AG04450 (cell line): ENCODE measurements at regions of chr17 and their contacts with region 1.

Region 1: GRCh38 chr17:51153210-51154072 is at the start of gene NME1:
- DNase-seq: peak; percentile 99
- H3K4me3 ChIP-seq: peak within 1 kb of the TSS; percentile 92
- H3K27ac ChIP-seq: peak within 1 kb of the TSS; percentile 65
- H3K27me3 ChIP-seq: no peaks in the 10 kb centered on the region
- CTCF ChIP-seq: peak; percentile 86
- polyA plus RNA-seq, gene NME1: 271 and 350 TPM in 2 replicates

Region 2: GRCh38 chr17:51000835-51001638 is 152.4 kb before region 1 on chr17:
- CTCF ChIA-PET with region 1: interaction called, 204 read pairs
- POLR2A ChIA-PET with region 1: interaction called, 3 read pairs
- DNase-seq: peak; percentile 45
- H3K4me3 ChIP-seq: no peak overlapping the region
- H3K27ac ChIP-seq: no peak overlapping the region
- H3K27me3 ChIP-seq: no peaks in the 10 kb centered on the region
- CTCF ChIP-seq: peak; percentile 54

Region 3: GRCh38 chr17:51006601-51007000 is 146.8 kb before region 1 on chr17:
- CTCF ChIA-PET with region 1: interaction called, 204 read pairs
- POLR2A ChIA-PET with region 1: interaction called, 3 read pairs
- DNase-seq: no peak
- H3K4me3 ChIP-seq: no peak overlapping the region
- H3K27ac ChIP-seq: no peak overlapping the region
- H3K27me3 ChIP-seq: no peaks in the 10 kb centered on the region
- CTCF ChIP-seq: no peak

Region 4: GRCh38 chr17:51015145-51015558 is 138.3 kb before region 1 on chr17:
- CTCF ChIA-PET with region 1: interaction called, 10 read pairs
- POLR2A ChIA-PET with region 1: no interaction called
- DNase-seq: no peak
- H3K4me3 ChIP-seq: no peak overlapping the region
- H3K27ac ChIP-seq: peak overlapping the region; percentile 68
- H3K27me3 ChIP-seq: no peaks in the 10 kb centered on the region
- CTCF ChIP-seq: no peak

Region 5: GRCh38 chr17:51120739-51121617 is 32.5 kb before region 1 on chr17 and contains the start of gene SPAG9:
- CTCF ChIA-PET with region 1: interaction called, 6 read pairs
- POLR2A ChIA-PET with region 1: interaction called, 10 read pairs
- DNase-seq: peak; percentile 87
- H3K4me3 ChIP-seq: peak within 1 kb of the TSS; percentile 98
- H3K27ac ChIP-seq: peak within 1 kb of the TSS; percentile 98
- H3K27me3 ChIP-seq: no peaks in the 10 kb centered on the region
- CTCF ChIP-seq: no peak
- polyA plus RNA-seq, gene SPAG9: 31.4 and 42.1 TPM in 2 replicates